ENCODE measurements at regions of chr7 and their contacts with region 1.

Region 1: DNA sequence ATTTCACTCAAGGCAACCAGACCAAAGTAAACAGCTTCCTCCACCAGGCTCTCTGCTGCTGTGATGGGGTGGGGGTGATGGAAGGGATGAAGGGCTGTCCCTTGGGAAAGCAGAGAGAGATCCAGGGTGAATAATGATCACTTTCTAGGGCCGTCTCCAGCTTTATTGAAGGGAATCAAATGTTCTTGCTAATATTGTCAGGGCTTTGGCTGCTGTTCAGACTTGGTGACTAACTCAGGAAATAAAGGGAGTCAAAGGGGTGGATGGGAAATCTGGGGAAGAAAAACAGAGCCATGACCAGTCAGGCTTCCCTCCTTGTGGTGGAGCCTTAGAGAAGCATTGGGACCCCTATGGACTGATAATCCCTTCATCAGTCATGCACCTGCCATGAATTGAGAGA is 196.2 kb upstream of the AGK start:
- DNase-seq: peak; percentile 87
- H3K4me3 ChIP-seq: no peak overlapping the region
- H3K27ac ChIP-seq: peak overlapping the region; percentile 61
- H3K4me1 ChIP-seq: peaks cover 23% of the 10 kb centered on the region
- H3K27me3 ChIP-seq: no peaks in the 10 kb centered on the region
- CTCF ChIP-seq: no peak
- POLR2A ChIP-seq: no peak

Region 2: GRCh38 chr7:141551094-141551781 is 196.2 kb after region 1 on chr7 and contains the start of gene AGK:
- CTCF ChIA-PET with region 1: no interaction called
- POLR2A ChIA-PET with region 1: no interaction called
- dilution Hi-C with region 1: no loop called
- intact Hi-C with region 1: loop called (anchors 5 kb)
- DNase-seq: peak; percentile 75
- H3K4me3 ChIP-seq: peak within 1 kb of the TSS; percentile 60 to 97 (median 82)
- H3K27ac ChIP-seq: peak within 1 kb of the TSS; percentile 38
- H3K4me1 ChIP-seq: peaks cover 13% of the 10 kb centered on the region
- H3K27me3 ChIP-seq: no peaks in the 10 kb centered on the region
- CTCF ChIP-seq: no peak
- POLR2A ChIP-seq: peak; percentile 79
- total RNA-seq, gene AGK: 33.9 and 34.3 TPM in 2 replicates